Activated CD8-positive, alpha-beta T cell treated with anti-CD3 and anti-CD28 coated beads for 36 hours (primary cell): ENCODE measurements at regions of chr11 and their contacts with region 1.

Region 1: DNA sequence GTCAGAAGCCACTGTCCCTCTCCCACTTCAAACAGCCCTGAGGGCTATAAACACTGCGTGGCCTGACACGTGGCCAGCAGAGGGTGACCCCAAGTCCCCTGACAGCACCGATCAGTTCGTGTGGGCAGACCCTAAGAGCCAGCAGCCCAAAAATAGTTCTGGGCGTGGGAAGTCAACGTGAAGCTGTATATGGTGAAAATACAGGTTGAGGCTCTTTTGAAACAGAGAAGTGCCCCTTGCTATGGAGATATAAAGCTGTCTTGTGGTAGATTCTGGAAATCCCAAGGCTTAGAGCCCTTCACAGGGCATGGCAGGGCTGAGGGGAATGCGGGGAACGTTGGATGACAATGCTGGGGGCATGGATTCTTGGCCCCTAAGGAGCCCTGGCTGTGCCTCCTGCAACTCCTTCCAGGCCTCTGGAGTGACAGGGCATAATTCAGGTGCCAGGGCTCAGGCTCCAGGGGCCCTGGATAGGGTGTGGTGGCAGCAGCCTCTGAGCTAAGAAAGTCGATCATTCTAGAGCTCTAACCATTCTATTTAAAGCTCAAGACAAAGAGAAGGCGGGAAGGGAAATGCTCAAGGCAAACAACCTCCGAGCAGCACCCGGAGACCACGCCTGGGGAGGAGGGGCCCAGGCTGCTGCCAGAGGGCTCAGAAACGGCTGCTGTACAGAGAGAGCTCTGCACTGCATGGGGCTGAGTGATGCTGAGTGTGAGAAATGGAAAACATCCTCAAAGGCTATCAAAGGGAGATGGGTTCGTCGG is 60.4 kb upstream of the CD5 start:
- DNase-seq: peak; percentile 90
- ATAC-seq: peak; percentile 97
- H3K4me3 Mint-ChIP-seq: peak overlapping the region; percentile 58
- H3K27ac Mint-ChIP-seq: peak overlapping the region; percentile 93
- H3K4me1 Mint-ChIP-seq: peaks cover 57% of the 10 kb centered on the region
- H3K27me3 Mint-ChIP-seq: no peaks in the 10 kb centered on the region
- CTCF ChIP-seq: no peak

Region 2: DNA sequence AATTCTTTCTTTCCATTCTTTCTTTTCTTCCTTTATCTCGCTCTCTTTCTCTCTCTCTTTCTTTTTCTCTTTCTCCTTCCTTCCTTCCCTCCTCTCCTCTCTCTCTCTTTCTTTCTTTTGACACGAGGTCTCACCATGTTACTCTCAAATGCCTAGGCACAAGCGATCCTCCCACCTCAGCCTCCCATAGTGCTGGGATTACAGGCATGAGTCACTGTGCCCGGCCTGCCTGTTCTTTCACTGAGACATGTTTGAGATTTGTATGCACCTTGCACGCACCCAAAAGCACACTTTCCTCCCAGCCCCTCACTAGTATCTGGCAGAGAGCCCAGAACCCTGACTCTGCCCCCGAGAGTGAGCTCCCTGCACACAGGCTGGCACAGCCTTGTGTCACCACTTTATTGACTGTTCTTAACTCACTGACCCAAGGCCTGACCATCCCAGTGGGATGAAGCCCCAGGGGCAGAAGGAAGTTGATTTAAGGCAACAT is 13.6 kb before region 1 on chr11:
- CTCF ChIA-PET with region 1: interaction called, 5 read pairs
- POLR2A ChIA-PET with region 1: interaction called, 13 read pairs
- intact Hi-C with region 1: no loop called
- DNase-seq: peak; percentile 88
- ATAC-seq: peak; percentile 31
- H3K4me3 Mint-ChIP-seq: peak overlapping the region; percentile 79
- H3K27ac Mint-ChIP-seq: peak overlapping the region; percentile 96
- H3K4me1 Mint-ChIP-seq: peaks cover 75% of the 10 kb centered on the region
- H3K27me3 Mint-ChIP-seq: no peaks in the 10 kb centered on the region
- CTCF ChIP-seq: no peak

Region 3: DNA sequence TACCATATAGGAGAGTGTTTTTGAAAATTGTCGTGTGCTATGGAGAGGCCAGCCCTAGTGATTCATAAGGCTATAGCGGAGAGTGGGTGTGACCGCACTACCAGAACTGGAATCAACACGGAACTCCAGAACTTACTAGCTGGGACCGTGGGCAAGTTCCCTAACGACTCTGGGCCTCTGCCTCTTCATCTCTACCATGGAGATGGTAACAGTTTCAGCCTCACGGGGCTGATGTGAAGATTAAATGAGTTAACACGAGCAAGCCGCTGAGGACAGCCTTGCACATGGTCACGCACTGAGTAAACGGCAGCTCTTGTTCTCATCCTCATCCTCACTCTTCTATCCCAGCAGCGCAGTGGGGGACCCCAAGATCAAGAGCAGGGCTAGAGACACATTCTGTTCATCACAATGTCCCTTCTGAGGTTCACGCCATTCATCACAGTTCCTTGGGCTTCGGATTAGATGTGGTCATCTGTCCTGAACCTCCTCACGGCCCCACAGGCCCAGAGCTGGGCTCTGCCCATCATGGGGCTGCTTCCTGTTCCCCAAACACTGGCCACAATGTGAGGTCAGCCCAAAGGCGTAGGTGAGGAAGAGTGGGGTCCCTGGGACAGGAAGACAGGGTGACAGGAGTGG is 13.1 kb after region 1 on chr11:
- CTCF ChIA-PET with region 1: interaction called, 9 read pairs
- POLR2A ChIA-PET with region 1: interaction called, 20 read pairs
- intact Hi-C with region 1: no loop called
- DNase-seq: no peak
- ATAC-seq: peak; percentile 43
- H3K4me3 Mint-ChIP-seq: no peak overlapping the region
- H3K27ac Mint-ChIP-seq: peak overlapping the region; percentile 11
- H3K4me1 Mint-ChIP-seq: peaks cover 64% of the 10 kb centered on the region
- H3K27me3 Mint-ChIP-seq: no peaks in the 10 kb centered on the region
- CTCF ChIP-seq: no peak

Region 4: GRCh38 chr11:61152816-61153592 is 111.1 kb after region 1 on chr11:
- CTCF ChIA-PET with region 1: no interaction called
- POLR2A ChIA-PET with region 1: no interaction called
- intact Hi-C with region 1: no loop called
- DNase-seq: no peak
- ATAC-seq: no peak
- H3K4me3 Mint-ChIP-seq: no peak overlapping the region
- H3K27ac Mint-ChIP-seq: no peak overlapping the region
- H3K4me1 Mint-ChIP-seq: peaks cover 9% of the 10 kb centered on the region
- H3K27me3 Mint-ChIP-seq: no peaks in the 10 kb centered on the region
- CTCF ChIP-seq: no peak